Activated T-helper 1 cell treated with anti-CD3 and anti-CD28 coated beads, Interleukin-12 subunit alpha, Interleukin-12 subunit beta, Interleukin-2, Interleukin-4 antibody, amounts not matched to agents 30 ng/mL and 10 ng/mL and 1 ng/mL, durations not matched to agents 14 hours and 24 hours and 36 hours (primary cell): ENCODE measurements at regions of chr3 and their contacts with region 1.

Region 1: DNA sequence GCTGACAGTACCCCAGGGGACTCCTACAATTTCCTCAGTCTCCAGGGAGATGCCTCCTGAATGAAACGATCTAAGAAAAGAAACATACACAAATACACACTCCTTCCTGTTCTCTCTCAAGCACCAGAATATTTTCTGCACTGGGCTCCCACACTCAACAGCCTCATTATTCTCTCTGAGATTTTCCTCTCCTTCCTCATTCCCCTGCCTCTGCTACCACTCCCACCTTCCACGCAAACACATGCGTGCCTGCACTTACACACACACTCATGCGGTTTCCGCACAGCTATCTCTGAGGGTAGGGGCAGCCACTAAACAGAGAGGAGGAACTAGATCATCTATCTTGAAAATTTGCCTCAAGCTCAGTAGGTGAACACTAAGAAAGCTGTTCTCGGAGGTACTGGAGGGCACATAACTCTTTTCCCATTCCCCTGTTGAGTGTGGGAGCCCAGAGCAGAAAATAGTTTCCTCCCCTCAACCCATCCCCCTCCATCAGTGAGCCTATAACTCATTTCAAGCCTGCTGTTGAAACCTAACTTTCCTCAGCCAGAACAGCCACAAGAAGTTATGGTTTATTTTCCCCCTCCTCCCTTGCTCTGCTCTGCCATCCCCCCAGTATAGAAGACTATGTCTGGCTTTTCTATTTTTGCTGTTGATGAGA is 30.5 kb upstream of the TIPARP start:
- DNase-seq: peak; percentile 53
- H3K4me3 Mint-ChIP-seq: peak overlapping the region; percentile 72
- H3K27ac Mint-ChIP-seq: peak overlapping the region; percentile 88
- H3K4me1 Mint-ChIP-seq: peaks cover 31% of the 10 kb centered on the region
- H3K27me3 Mint-ChIP-seq: no peaks in the 10 kb centered on the region

Region 2: GRCh38 chr3:156388497-156389448 is 255.1 kb before region 1 on chr3:
- intact Hi-C with region 1: no loop called
- DNase-seq: no peak
- H3K4me3 Mint-ChIP-seq: no peak overlapping the region
- H3K27ac Mint-ChIP-seq: no peak overlapping the region
- H3K4me1 Mint-ChIP-seq: no peaks in the 10 kb centered on the region
- H3K27me3 Mint-ChIP-seq: peaks cover 27% of the 10 kb centered on the region

Region 3: GRCh38 chr3:156605686-156606605 is 37.9 kb before region 1 on chr3:
- intact Hi-C with region 1: loop called (anchors 5 kb)
- DNase-seq: no peak
- H3K4me3 Mint-ChIP-seq: peak overlapping the region; percentile 82
- H3K27ac Mint-ChIP-seq: peak overlapping the region; percentile 29
- H3K4me1 Mint-ChIP-seq: peaks cover 46% of the 10 kb centered on the region
- H3K27me3 Mint-ChIP-seq: peaks cover 11% of the 10 kb centered on the region

Region 4: DNA sequence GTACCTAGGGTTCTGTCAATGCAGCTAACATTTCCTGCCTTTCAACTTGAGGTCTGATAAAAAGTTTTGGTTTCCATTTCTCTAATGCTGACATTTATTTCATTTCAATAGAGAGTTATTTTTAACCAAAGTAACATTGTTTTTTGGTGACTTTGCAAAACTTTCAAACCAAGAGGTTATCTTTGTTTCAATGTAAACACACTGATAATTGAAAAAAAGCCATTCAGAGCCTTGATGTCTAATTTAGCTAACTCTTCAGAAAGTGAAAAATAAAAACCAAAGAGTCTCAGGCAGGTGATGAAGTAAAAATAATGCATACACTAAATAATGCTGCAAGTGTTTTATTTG is 20.9 kb after region 1 on chr3:
- intact Hi-C with region 1: loop called (anchors 2 kb)
- DNase-seq: no peak
- H3K4me3 Mint-ChIP-seq: peak overlapping the region; percentile 32
- H3K27ac Mint-ChIP-seq: peak overlapping the region; percentile 18
- H3K4me1 Mint-ChIP-seq: peaks cover 71% of the 10 kb centered on the region
- H3K27me3 Mint-ChIP-seq: no peaks in the 10 kb centered on the region